CD14-positive monocyte (primary cell): ENCODE measurements at regions of chr4 and their contacts with region 1.

Region 1: GRCh38 chr4:113394730-113395530 is 345.5 kb downstream of the ANK2 start:
- DNase-seq: peak; percentile 37 to 65 (median 56)
- H3K4me3 ChIP-seq: no peak overlapping the region
- H3K4me3 Mint-ChIP-seq: no peak overlapping the region
- H3K27ac ChIP-seq: no peak overlapping the region
- H3K27ac Mint-ChIP-seq: no peak overlapping the region
- H3K4me1 ChIP-seq: no peaks in the 10 kb centered on the region
- H3K4me1 Mint-ChIP-seq: no peaks in the 10 kb centered on the region
- H3K27me3 ChIP-seq: no peaks in the 10 kb centered on the region
- H3K27me3 Mint-ChIP-seq: peaks cover 0 to 5% (median 2%) of the 10 kb centered on the region in 3 donors
- CTCF ChIP-seq: peak; percentile 86

Region 2: GRCh38 chr4:113278324-113278934 is 116.5 kb before region 1 on chr4:
- intact Hi-C with region 1: no loop called
- DNase-seq: peak in 1 of 3 donors; percentile 11
- H3K4me3 ChIP-seq: no peak overlapping the region
- H3K4me3 Mint-ChIP-seq: no peak overlapping the region
- H3K27ac ChIP-seq: no peak overlapping the region
- H3K27ac Mint-ChIP-seq: no peak overlapping the region
- H3K4me1 ChIP-seq: no peaks in the 10 kb centered on the region
- H3K4me1 Mint-ChIP-seq: no peaks in the 10 kb centered on the region
- H3K27me3 ChIP-seq: no peaks in the 10 kb centered on the region
- H3K27me3 Mint-ChIP-seq: peaks cover 1 to 5% (median 4%) of the 10 kb centered on the region in 3 donors
- CTCF ChIP-seq: peak; percentile 66

Region 3: GRCh38 chr4:113339430-113339813 is 55.5 kb before region 1 on chr4:
- intact Hi-C with region 1: no loop called
- DNase-seq: no peak
- H3K4me3 ChIP-seq: no peak overlapping the region
- H3K4me3 Mint-ChIP-seq: no peak overlapping the region
- H3K27ac ChIP-seq: no peak overlapping the region
- H3K27ac Mint-ChIP-seq: no peak overlapping the region
- H3K4me1 ChIP-seq: no peaks in the 10 kb centered on the region
- H3K4me1 Mint-ChIP-seq: no peaks in the 10 kb centered on the region
- H3K27me3 ChIP-seq: no peaks in the 10 kb centered on the region
- H3K27me3 Mint-ChIP-seq: no peaks in the 10 kb centered on the region
- CTCF ChIP-seq: no peak

Region 4: GRCh38 chr4:113499696-113500095 is 104.8 kb after region 1 on chr4:
- intact Hi-C with region 1: no loop called
- DNase-seq: no peak
- H3K4me3 ChIP-seq: no peak overlapping the region
- H3K4me3 Mint-ChIP-seq: no peak overlapping the region
- H3K27ac ChIP-seq: no peak overlapping the region
- H3K27ac Mint-ChIP-seq: no peak overlapping the region
- H3K4me1 ChIP-seq: no peaks in the 10 kb centered on the region
- H3K4me1 Mint-ChIP-seq: no peaks in the 10 kb centered on the region
- H3K27me3 ChIP-seq: no peaks in the 10 kb centered on the region
- H3K27me3 Mint-ChIP-seq: no peaks in the 10 kb centered on the region
- CTCF ChIP-seq: no peak

Region 5: DNA sequence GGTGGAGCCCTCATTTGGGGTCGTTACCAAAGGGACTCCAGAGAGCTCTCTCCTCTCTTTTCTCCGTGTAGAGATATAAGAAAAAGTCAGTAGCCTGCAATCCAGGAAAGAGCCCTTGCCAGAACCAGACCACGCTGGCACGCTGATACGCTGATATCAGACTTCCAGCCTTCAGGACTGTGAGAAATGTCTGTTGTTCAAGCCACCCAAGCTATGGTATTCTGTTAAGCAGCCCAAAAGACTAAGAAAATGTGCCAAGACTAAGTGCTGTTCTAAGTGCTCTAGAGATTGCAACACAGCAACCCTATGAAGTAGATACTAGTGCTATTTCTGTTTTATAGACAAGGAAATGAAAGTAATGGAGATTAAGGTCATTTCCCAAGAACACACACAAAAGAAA is 160.9 kb after region 1 on chr4:
- intact Hi-C with region 1: no loop called
- DNase-seq: peak in 2 of 3 donors; percentile 10 to 19
- H3K4me3 ChIP-seq: no peak overlapping the region
- H3K4me3 Mint-ChIP-seq: no peak overlapping the region
- H3K27ac ChIP-seq: peak overlapping the region in 1 of 2 donors; percentile 4
- H3K27ac Mint-ChIP-seq: no peak overlapping the region
- H3K4me1 ChIP-seq: peaks cover 11 to 13% of the 10 kb centered on the region in 2 donors
- H3K4me1 Mint-ChIP-seq: peaks cover 21% of the 10 kb centered on the region
- H3K27me3 ChIP-seq: no peaks in the 10 kb centered on the region
- H3K27me3 Mint-ChIP-seq: peaks cover 0 to 14% (median 3%) of the 10 kb centered on the region in 3 donors
- CTCF ChIP-seq: no peak

Region 6: DNA sequence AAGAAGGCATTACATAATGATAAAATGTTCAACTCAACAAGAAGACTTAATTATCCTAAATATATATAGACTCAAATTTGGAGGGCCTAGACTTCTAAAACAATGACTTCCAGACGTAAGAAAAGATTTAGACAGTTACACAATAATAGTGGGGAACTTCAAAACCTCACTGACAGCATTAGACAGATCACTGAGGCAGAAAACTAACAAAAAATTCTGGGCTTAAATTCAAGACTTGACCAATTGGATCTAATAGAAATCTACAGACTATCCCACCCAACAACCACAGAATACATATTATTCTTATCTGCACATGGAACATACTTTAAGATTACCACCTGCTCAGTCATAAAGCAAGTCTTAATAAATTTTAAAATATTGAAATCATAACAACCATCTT is 677.9 kb after region 1 on chr4:
- intact Hi-C with region 1: loop called (anchors 2 kb)
- DNase-seq: no peak
- H3K4me3 ChIP-seq: no peak overlapping the region
- H3K4me3 Mint-ChIP-seq: no peak overlapping the region
- H3K27ac ChIP-seq: no peak overlapping the region
- H3K27ac Mint-ChIP-seq: no peak overlapping the region
- H3K4me1 ChIP-seq: no peaks in the 10 kb centered on the region
- H3K4me1 Mint-ChIP-seq: no peaks in the 10 kb centered on the region
- H3K27me3 ChIP-seq: no peaks in the 10 kb centered on the region
- H3K27me3 Mint-ChIP-seq: peaks cover 0 to 6% (median 0%) of the 10 kb centered on the region in 3 donors
- CTCF ChIP-seq: no peak

Region 7: GRCh38 chr4:114694770-114695169 is 1299.8 kb after region 1 on chr4:
- intact Hi-C with region 1: loop called in 1 of 2 experiments (anchors 10 kb)
- DNase-seq: peak in 1 of 3 donors; percentile 1
- H3K4me3 ChIP-seq: no peak overlapping the region
- H3K4me3 Mint-ChIP-seq: no peak overlapping the region
- H3K27ac ChIP-seq: no peak overlapping the region
- H3K27ac Mint-ChIP-seq: no peak overlapping the region
- H3K4me1 ChIP-seq: no peaks in the 10 kb centered on the region
- H3K4me1 Mint-ChIP-seq: no peaks in the 10 kb centered on the region
- H3K27me3 ChIP-seq: no peaks in the 10 kb centered on the region
- H3K27me3 Mint-ChIP-seq: no peaks in the 10 kb centered on the region
- CTCF ChIP-seq: peak; percentile 39